Activated T-helper 1 cell treated with anti-CD3 and anti-CD28 coated beads, Interleukin-12 subunit alpha, Interleukin-12 subunit beta, Interleukin-2, Interleukin-4 antibody, amounts not matched to agents 30 ng/mL and 10 ng/mL and 1 ng/mL, durations not matched to agents 14 hours and 24 hours and 36 hours (primary cell): ENCODE measurements at regions of chr9 and their contacts with region 1.

Region 1: DNA sequence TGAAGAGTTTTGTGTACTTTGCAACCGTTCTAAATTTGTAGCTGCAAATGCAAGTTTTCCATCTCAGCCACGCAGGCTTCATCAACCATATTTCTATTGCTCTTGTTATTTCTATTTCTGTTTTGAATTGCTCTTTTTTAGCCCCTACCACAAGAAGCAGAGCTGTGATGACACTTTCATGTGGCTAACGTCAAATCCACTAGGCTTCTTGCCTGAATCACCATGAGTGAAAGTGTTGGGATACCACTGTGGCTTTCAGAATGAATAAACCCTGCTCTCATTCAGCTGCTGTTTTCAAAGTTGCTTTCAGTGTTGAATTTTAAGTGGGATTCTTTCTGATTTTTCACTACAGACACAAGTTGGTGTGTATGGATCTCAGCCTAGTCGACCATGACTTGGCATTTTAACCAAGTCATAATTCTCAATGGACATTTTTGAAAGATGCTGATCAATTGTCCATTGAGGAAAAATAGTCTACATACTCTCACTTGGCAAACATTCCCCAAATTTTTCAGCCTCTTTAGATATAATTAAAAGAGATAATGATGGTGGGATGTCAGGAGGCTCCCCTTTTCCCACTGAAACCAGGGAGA is 41.0 kb upstream of the MTAP start:
- DNase-seq: peak; percentile 46
- H3K4me3 Mint-ChIP-seq: no peak overlapping the region
- H3K27ac Mint-ChIP-seq: peak overlapping the region; percentile 18
- H3K4me1 Mint-ChIP-seq: peaks cover 9% of the 10 kb centered on the region
- H3K27me3 Mint-ChIP-seq: peaks cover 78% of the 10 kb centered on the region

Region 2: DNA sequence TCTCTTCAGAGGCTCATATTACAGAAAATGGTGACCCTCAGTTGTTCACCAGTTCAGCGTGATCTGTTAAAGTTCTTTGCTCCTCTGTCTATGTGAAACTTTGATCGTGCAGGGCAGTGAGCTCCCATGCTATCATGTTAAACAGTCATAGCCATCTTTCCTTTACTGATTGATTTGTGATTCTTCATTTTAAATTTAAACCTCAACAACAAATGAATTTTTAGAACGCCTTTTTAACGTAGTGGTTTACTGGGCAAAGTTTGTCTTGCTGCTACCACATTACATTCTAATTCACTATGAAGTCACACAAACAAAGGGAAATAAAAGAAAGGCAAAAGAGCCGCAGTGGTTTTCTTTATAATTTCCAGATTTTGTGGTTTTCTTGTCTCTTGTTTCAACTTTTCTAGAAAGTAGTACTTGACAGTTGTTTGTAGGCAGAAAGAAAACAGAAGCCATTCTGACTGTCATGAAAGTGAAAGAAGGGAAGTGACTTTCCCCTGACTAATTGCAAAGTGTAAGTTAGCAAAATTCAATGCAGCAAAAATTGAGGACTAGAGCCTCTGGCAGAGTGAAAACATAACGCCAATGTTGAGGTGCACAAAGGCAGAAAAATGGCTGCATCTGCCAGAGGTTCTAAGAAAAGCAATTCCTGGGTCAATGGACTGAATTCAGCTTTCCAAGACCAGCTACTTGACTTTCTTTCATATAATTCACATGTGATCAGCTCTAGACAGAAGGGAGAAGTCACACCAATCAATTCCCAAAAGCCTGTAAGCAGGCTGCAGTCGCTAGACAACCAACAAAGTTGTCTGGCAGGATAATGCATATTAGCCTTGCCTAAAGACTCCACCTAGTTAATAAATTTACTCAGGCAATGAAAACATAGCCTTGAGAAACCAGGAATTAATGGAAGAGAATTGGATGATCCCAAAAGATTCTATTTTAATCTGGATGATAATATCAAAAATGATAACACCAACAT is 403.6 kb before region 1 on chr9:
- intact Hi-C with region 1: loop called (anchors 1 kb)
- DNase-seq: no peak
- H3K4me3 Mint-ChIP-seq: peak overlapping the region; percentile 56
- H3K27ac Mint-ChIP-seq: peak overlapping the region; percentile 68
- H3K4me1 Mint-ChIP-seq: peaks cover 14% of the 10 kb centered on the region
- H3K27me3 Mint-ChIP-seq: peaks cover 57% of the 10 kb centered on the region

Region 3: GRCh38 chr9:21506626-21507484 is 254.6 kb before region 1 on chr9:
- intact Hi-C with region 1: no loop called
- DNase-seq: no peak
- H3K4me3 Mint-ChIP-seq: no peak overlapping the region
- H3K27ac Mint-ChIP-seq: no peak overlapping the region
- H3K4me1 Mint-ChIP-seq: no peaks in the 10 kb centered on the region
- H3K27me3 Mint-ChIP-seq: no peaks in the 10 kb centered on the region

Region 4: GRCh38 chr9:21576331-21577189 is 184.8 kb before region 1 on chr9:
- intact Hi-C with region 1: loop called (anchors 1 kb)
- DNase-seq: no peak
- H3K4me3 Mint-ChIP-seq: peak overlapping the region; percentile 4
- H3K27ac Mint-ChIP-seq: no peak overlapping the region
- H3K4me1 Mint-ChIP-seq: peaks cover 36% of the 10 kb centered on the region
- H3K27me3 Mint-ChIP-seq: peaks cover 33% of the 10 kb centered on the region

Region 5: DNA sequence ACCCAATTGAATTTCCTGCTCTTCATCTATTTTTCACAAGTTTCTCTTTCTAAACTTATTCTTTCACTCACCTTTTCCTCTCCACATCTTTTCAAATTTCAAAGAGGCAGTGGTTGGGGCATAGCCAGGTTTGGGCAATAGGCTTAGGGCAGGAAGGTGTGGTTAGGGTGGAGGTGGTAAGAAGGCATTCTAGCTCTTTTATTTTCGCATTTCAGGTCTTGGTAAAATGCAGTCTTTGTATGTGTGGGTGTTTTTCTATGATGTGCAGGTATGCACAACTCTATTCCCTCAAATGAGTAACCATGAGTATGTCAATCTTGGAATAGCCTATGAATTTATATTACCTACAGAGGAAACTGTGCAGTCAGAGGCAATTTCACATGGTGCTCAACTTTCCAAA is 149.5 kb before region 1 on chr9:
- intact Hi-C with region 1: loop called (anchors 1 kb)
- DNase-seq: peak; percentile 11
- H3K4me3 Mint-ChIP-seq: no peak overlapping the region
- H3K27ac Mint-ChIP-seq: peak overlapping the region; percentile 16
- H3K4me1 Mint-ChIP-seq: peaks cover 36% of the 10 kb centered on the region
- H3K27me3 Mint-ChIP-seq: peaks cover 3% of the 10 kb centered on the region

Region 6: GRCh38 chr9:21688108-21689102 is 73.0 kb before region 1 on chr9:
- intact Hi-C with region 1: loop called (anchors 1 kb)
- DNase-seq: no peak
- H3K4me3 Mint-ChIP-seq: no peak overlapping the region
- H3K27ac Mint-ChIP-seq: no peak overlapping the region
- H3K4me1 Mint-ChIP-seq: peaks cover 41% of the 10 kb centered on the region
- H3K27me3 Mint-ChIP-seq: peaks cover 2% of the 10 kb centered on the region

Region 7: GRCh38 chr9:21777701-21778100 is 16.3 kb after region 1 on chr9:
- intact Hi-C with region 1: loop called (anchors 2 kb)
- DNase-seq: no peak
- H3K4me3 Mint-ChIP-seq: no peak overlapping the region
- H3K27ac Mint-ChIP-seq: no peak overlapping the region
- H3K4me1 Mint-ChIP-seq: no peaks in the 10 kb centered on the region
- H3K27me3 Mint-ChIP-seq: peaks cover 11% of the 10 kb centered on the region

Region 8: DNA sequence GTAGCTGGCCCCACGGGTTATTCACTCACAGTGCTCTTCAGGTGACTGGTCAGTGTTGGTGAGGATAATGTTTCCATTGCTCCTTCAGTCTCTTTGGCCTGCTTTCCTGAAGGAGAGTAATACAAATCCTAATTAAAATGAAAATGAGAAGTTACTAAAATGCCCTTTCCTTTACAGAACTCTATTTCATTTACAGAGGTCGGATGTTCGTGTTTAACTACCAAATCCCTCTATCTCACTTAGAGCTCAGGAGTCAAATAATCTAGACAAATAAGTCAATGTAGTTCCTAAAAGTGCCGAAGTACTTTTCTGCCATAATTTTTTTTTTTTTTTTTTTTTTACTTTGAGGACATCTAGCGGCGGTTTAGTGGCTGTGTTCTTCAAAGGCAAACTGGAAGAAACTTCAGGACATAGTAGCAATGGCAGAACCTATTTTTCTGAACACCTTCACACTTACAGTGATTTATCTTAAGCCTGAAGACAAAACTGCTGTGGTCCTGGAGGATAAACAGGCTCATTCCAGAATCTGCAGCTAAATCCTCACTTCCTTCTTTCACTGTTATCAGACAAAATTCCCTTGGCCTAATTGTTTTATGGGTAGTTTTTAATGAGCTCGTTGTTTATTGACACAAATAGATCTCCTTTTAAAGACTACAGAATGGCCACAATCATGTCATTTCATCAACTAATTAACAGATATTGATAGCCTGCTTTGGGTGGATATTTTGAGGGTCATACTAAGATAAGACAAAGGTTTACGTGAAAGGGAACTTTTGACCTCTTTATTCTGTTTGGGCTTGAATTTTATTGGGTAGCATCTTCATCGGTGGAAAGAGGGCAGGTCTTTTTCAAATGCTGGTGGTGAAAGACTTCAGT is 477.6 kb after region 1 on chr9:
- intact Hi-C with region 1: loop called (anchors 1 kb)
- DNase-seq: no peak
- H3K4me3 Mint-ChIP-seq: no peak overlapping the region
- H3K27ac Mint-ChIP-seq: no peak overlapping the region
- H3K4me1 Mint-ChIP-seq: peaks cover 50% of the 10 kb centered on the region
- H3K27me3 Mint-ChIP-seq: peaks cover 43% of the 10 kb centered on the region